Activated CD4-positive, alpha-beta memory T cell treated with anti-CD3 and anti-CD28 coated beads for 36 hours (primary cell): ENCODE measurements at regions of chr9 and their contacts with region 1.

Region 1: GRCh38 chr9:5437254-5438216 is at the start of gene PLGRKT:
- DNase-seq: peak; percentile 95
- H3K4me3 Mint-ChIP-seq: peak within 1 kb of the TSS; percentile 97
- H3K27ac Mint-ChIP-seq: peak within 1 kb of the TSS; percentile 98
- H3K4me1 Mint-ChIP-seq: peaks cover 59% of the 10 kb centered on the region
- H3K27me3 Mint-ChIP-seq: no peaks in the 10 kb centered on the region
- total RNA-seq, gene PLGRKT: 52.9 to 59.4 TPM

Region 2: GRCh38 chr9:4679268-4680172 is 758.0 kb before region 1 on chr9 and contains the start of gene CDC37L1:
- CTCF ChIA-PET with region 1: no interaction called
- POLR2A ChIA-PET with region 1: no interaction called
- intact Hi-C with region 1: loop called (anchors 1 kb)
- DNase-seq: peak; percentile 99
- H3K4me3 Mint-ChIP-seq: no peak within 1 kb of the TSS
- H3K27ac Mint-ChIP-seq: no peak within 1 kb of the TSS
- H3K4me1 Mint-ChIP-seq: peaks cover 10% of the 10 kb centered on the region
- H3K27me3 Mint-ChIP-seq: no peaks in the 10 kb centered on the region
- total RNA-seq, gene CDC37L1: 9.7 to 11.0 TPM

Region 3: GRCh38 chr9:4939118-4939561 is 498.4 kb before region 1 on chr9:
- CTCF ChIA-PET with region 1: no interaction called
- POLR2A ChIA-PET with region 1: no interaction called
- intact Hi-C with region 1: loop called (anchors 5 kb)
- DNase-seq: peak; percentile 25
- H3K4me3 Mint-ChIP-seq: no peak overlapping the region
- H3K27ac Mint-ChIP-seq: peak overlapping the region; percentile 91
- H3K4me1 Mint-ChIP-seq: peaks cover 74% of the 10 kb centered on the region
- H3K27me3 Mint-ChIP-seq: no peaks in the 10 kb centered on the region

Region 4: DNA sequence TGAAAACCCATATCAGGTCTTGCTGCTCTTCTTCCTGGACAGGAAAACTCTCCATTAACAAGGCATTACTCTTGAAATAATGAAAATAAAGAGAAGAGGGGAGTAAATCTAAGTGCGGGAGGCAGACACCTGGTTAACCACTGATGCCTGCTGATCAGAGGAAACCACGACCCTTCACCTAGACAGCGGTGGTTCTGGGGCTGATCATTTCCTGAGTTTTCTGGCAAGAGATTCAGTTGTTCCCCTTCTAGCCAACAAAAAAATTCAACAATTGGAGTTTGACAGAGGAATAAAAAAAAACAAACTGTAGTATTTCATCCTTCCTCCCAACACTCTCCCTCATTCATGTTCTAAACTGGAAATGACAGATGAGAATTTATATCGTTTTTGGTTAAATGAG is 136.0 kb before region 1 on chr9:
- CTCF ChIA-PET with region 1: no interaction called
- POLR2A ChIA-PET with region 1: no interaction called
- intact Hi-C with region 1: loop called (anchors 10 kb)
- DNase-seq: no peak
- H3K4me3 Mint-ChIP-seq: peak overlapping the region; percentile 25
- H3K27ac Mint-ChIP-seq: no peak overlapping the region
- H3K4me1 Mint-ChIP-seq: peaks cover 21% of the 10 kb centered on the region
- H3K27me3 Mint-ChIP-seq: no peaks in the 10 kb centered on the region

Region 5: GRCh38 chr9:5375091-5375490 is 62.4 kb before region 1 on chr9:
- CTCF ChIA-PET with region 1: no interaction called
- POLR2A ChIA-PET with region 1: no interaction called
- intact Hi-C with region 1: loop called (anchors 5 kb)
- DNase-seq: peak; percentile 76
- H3K4me3 Mint-ChIP-seq: no peak overlapping the region
- H3K27ac Mint-ChIP-seq: peak overlapping the region; percentile 59
- H3K4me1 Mint-ChIP-seq: peaks cover 31% of the 10 kb centered on the region
- H3K27me3 Mint-ChIP-seq: no peaks in the 10 kb centered on the region

Region 6: DNA sequence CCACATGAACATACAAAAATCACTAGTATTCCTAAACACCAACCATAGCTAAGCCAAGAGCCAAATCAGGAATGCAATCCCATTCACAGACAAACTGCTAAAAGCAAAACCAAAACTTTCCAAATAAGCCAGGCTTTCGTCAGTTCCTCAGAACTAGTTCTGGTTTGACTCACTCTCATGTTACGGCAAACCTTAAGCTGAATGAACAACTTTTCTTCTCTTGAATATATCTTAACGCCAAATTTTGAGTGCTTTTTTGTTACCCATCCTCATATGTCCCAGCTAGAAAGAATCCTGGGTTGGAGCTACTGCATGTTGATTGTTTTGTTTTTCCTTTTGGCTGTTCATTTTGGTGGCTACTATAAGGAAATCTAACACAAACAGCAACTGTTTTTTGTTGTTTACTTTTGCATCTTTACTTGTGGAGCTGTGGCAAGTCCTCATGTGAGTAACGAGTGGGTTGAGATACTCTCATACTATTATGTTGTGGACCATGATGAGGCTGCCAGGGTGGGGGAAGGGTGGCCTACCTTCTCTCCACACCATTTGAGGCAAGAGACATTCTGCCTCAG is 72.9 kb after region 1 on chr9 and contains the start of gene PDCD1LG2:
- CTCF ChIA-PET with region 1: no interaction called
- POLR2A ChIA-PET with region 1: interaction called, 7 read pairs
- intact Hi-C with region 1: loop called (anchors 1 kb)
- DNase-seq: peak; percentile 82
- H3K4me3 Mint-ChIP-seq: peak within 1 kb of the TSS; percentile 73
- H3K27ac Mint-ChIP-seq: peak within 1 kb of the TSS; percentile 90
- H3K4me1 Mint-ChIP-seq: peaks cover 51% of the 10 kb centered on the region
- H3K27me3 Mint-ChIP-seq: no peaks in the 10 kb centered on the region
- total RNA-seq, gene PDCD1LG2: 0.73 to 0.83 TPM

Region 7: GRCh38 chr9:6008169-6008979 is 570.8 kb after region 1 on chr9:
- CTCF ChIA-PET with region 1: no interaction called
- POLR2A ChIA-PET with region 1: no interaction called
- intact Hi-C with region 1: loop called (anchors 5 kb)
- DNase-seq: peak; percentile 97
- H3K4me3 Mint-ChIP-seq: peak overlapping the region; percentile 74
- H3K27ac Mint-ChIP-seq: peak overlapping the region; percentile 79
- H3K4me1 Mint-ChIP-seq: peaks cover 56% of the 10 kb centered on the region
- H3K27me3 Mint-ChIP-seq: no peaks in the 10 kb centered on the region